CD8-positive, alpha-beta T cell (primary cell): ENCODE measurements at regions of chr12 and their contacts with region 1.

Region 1: GRCh38 chr12:6845395-6845794 is 4.7 kb downstream of the GNB3 start:
- DNase-seq: no peak
- ATAC-seq: no peak
- H3K4me3 ChIP-seq: no peak overlapping the region
- H3K4me3 Mint-ChIP-seq: no peak overlapping the region
- H3K27ac ChIP-seq: no peak overlapping the region
- H3K27ac Mint-ChIP-seq: no peak overlapping the region
- H3K4me1 ChIP-seq: no peaks in the 10 kb centered on the region
- H3K4me1 Mint-ChIP-seq: no peaks in the 10 kb centered on the region
- H3K27me3 ChIP-seq: no peaks in the 10 kb centered on the region
- H3K27me3 Mint-ChIP-seq: no peaks in the 10 kb centered on the region
- CTCF ChIP-seq: no peak

Region 2: GRCh38 chr12:6470375-6471163 is 374.8 kb before region 1 on chr12 and contains the start of gene VAMP1:
- CTCF ChIA-PET with region 1: no interaction called
- POLR2A ChIA-PET with region 1: no interaction called
- intact Hi-C with region 1: no loop called
- DNase-seq: peak; percentile 94 to 98 (median 97)
- ATAC-seq: peak; percentile 88
- H3K4me3 ChIP-seq: peak within 1 kb of the TSS; percentile 88 to 89
- H3K4me3 Mint-ChIP-seq: peak within 1 kb of the TSS; percentile 92
- H3K27ac ChIP-seq: peak within 1 kb of the TSS; percentile 79 to 84
- H3K27ac Mint-ChIP-seq: peak within 1 kb of the TSS; percentile 90
- H3K4me1 ChIP-seq: peaks cover 42% of the 10 kb centered on the region
- H3K4me1 Mint-ChIP-seq: peaks cover 47% of the 10 kb centered on the region
- H3K27me3 ChIP-seq: no peaks in the 10 kb centered on the region
- H3K27me3 Mint-ChIP-seq: no peaks in the 10 kb centered on the region
- CTCF ChIP-seq: no peak
- total RNA-seq, gene VAMP1: 43.9 to 50.9 TPM

Region 3: DNA sequence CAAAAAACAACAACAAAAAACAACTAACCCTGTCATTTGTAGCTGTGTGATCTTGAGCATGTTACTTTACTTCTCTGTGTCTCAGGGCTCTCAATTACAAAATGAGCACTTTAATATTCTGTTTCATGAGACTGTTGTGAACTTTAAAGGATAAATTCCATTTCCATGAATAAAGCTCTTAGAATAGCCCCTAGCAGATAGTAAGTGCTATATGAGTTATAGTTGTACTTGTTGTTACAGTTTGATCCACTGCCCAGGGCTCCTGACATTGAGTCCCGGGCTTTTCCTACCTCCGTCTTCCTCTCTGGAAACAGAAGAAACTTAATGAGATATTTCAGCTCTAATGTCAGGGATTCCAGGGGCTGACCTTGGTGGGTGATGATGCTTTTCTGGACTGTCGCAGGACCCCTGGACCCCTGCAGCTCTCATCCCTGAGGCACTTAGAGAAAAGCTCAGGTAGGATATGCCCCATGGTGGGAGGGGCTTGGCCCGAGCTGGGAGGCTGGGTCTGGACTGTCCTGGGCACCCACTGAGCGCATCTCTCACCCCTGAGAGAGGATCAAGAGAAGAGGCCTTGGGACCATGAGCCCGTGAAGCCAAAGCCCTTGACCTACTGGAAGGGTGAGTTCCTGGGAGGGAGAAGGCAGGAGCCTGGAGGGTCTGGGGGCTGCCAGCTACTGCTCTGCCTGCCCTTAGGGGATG is 12.1 kb before region 1 on chr12:
- CTCF ChIA-PET with region 1: interaction called, 24 read pairs
- POLR2A ChIA-PET with region 1: no interaction called
- intact Hi-C with region 1: loop called in 1 of 2 experiments (anchors 2 kb)
- DNase-seq: no peak
- ATAC-seq: no peak
- H3K4me3 ChIP-seq: no peak overlapping the region
- H3K4me3 Mint-ChIP-seq: no peak overlapping the region
- H3K27ac ChIP-seq: no peak overlapping the region
- H3K27ac Mint-ChIP-seq: no peak overlapping the region
- H3K4me1 ChIP-seq: peaks cover 13% of the 10 kb centered on the region
- H3K4me1 Mint-ChIP-seq: peaks cover 13% of the 10 kb centered on the region
- H3K27me3 ChIP-seq: peaks cover 0 to 11% of the 10 kb centered on the region in 2 experiments
- H3K27me3 Mint-ChIP-seq: peaks cover 2% of the 10 kb centered on the region
- CTCF ChIP-seq: no peak